SK-N-SH (cell line): ENCODE measurements at regions of chr19 and their contacts with region 1.

Region 1: DNA sequence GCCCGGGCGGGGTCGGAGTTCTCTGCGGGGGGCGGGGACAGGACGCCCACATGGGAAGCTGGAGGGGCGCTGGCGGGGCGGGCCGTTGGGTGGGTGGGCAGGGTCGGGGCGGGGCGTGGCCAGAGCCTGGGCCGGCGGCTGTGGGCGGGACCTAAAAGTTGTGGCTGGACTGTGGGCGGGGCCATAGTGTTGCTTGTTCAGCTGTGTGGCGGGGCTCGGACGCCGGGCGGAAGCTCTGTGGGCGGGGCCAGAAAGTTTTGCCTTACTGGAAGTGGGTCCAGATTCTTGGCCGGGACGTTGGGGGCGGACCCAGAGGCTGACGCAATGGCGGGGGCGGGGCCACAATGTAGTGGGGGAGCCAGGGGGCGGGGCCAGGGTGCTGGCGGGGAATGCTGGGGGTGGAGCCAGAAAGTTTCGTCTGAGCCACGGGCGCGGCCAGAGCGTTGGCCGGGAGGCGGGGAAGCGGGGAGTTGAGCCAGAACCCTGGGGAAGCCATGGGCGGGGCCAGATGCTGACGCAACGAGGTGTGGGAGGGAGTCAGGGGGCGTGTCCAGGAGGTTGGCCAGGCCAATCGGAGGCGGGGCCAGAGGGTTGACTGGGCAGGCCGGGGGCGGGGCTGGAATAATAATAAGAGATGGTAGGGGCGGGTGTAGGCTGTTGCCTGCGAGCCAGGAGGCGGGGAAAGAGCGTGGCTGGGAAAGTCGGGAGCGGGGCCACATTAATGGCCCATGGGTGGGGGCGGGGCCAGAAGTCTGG is 541 bp downstream of the CCDC9 start:
- DNase-seq: peak; percentile 97
- H3K4me3 ChIP-seq: peak overlapping the region; percentile 69 to 72
- H3K27ac ChIP-seq: peak overlapping the region; percentile 94
- H3K4me1 ChIP-seq: peaks cover 9 to 13% of the 10 kb centered on the region in 2 experiments; a peak in 2 of 4 replicates
- H3K27me3 ChIP-seq: no peaks in the 10 kb centered on the region
- CTCF ChIP-seq: no peak
- EP300 ChIP-seq: no peak
- RAD21 ChIP-seq: no peak

Region 2: GRCh38 chr19:47112997-47113849 is 143.6 kb before region 1 on chr19 and contains the start of gene ZC3H4:
- CTCF ChIA-PET with region 1: no interaction called
- POLR2A ChIA-PET with region 1: interaction called, 11 read pairs
- DNase-seq: peak; percentile 92
- H3K4me3 ChIP-seq: peak within 1 kb of the TSS; percentile 78 to 92
- H3K27ac ChIP-seq: peak within 1 kb of the TSS; percentile 99 to 100
- H3K4me1 ChIP-seq: peaks cover 18 to 23% of the 10 kb centered on the region in 2 experiments
- H3K27me3 ChIP-seq: no peaks in the 10 kb centered on the region
- CTCF ChIP-seq: no peak
- EP300 ChIP-seq: peak in 1 of 2 experiments; percentile 28; a peak in 1 of 4 replicates
- RAD21 ChIP-seq: no peak
- polyA plus RNA-seq, gene ZC3H4: 3.9 and 7.6 TPM in 2 replicates

Region 3: DNA sequence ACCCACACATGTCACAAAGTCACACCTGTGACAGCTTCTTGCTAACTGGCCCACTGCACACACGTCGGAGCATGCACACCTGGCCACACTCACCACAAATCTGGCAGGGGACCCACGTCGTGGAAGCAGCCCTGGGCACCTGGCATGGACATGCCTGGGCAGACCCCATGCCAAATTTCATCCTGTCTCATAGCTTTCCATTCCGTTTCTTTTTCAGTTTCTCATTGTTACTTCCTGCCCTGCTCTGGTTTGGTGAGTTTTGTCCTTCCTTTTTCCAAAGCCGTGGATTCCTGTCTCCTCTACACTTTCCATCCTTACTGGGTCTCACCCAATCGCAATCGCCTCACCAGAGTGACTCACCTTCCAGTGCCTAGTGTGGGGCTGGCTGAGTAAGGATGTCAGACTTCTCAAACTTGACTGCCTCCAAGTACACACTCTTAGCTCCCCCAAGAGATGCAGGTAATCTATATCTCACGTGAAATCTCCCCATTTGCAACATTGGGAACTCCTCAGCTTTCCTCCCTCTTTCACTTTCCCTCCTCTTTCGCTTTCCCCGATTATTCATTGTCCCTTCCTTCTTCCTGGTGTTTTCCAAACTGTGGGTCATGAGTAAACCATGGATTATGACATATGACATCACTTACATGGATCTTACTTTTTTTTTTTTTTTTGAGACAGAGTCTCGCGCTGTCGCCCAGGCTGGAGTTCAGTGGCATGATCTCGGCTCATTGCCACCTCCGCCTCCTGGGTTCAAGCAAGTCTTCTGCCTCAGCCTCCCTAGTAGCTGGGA is 24.2 kb before region 1 on chr19:
- CTCF ChIA-PET with region 1: no interaction called
- POLR2A ChIA-PET with region 1: no interaction called
- DNase-seq: no peak
- H3K4me3 ChIP-seq: peak overlapping the region; percentile 40 to 63; a peak in 3 of 4 replicates
- H3K27ac ChIP-seq: peak overlapping the region; percentile 68 to 89
- H3K4me1 ChIP-seq: peaks cover 8 to 22% of the 10 kb centered on the region in 2 experiments
- H3K27me3 ChIP-seq: no peaks in the 10 kb centered on the region
- CTCF ChIP-seq: no peak
- EP300 ChIP-seq: no peak
- RAD21 ChIP-seq: no peak